B cell (primary cell): ENCODE measurements at regions of chr20 and their contacts with region 1.

Region 1: DNA sequence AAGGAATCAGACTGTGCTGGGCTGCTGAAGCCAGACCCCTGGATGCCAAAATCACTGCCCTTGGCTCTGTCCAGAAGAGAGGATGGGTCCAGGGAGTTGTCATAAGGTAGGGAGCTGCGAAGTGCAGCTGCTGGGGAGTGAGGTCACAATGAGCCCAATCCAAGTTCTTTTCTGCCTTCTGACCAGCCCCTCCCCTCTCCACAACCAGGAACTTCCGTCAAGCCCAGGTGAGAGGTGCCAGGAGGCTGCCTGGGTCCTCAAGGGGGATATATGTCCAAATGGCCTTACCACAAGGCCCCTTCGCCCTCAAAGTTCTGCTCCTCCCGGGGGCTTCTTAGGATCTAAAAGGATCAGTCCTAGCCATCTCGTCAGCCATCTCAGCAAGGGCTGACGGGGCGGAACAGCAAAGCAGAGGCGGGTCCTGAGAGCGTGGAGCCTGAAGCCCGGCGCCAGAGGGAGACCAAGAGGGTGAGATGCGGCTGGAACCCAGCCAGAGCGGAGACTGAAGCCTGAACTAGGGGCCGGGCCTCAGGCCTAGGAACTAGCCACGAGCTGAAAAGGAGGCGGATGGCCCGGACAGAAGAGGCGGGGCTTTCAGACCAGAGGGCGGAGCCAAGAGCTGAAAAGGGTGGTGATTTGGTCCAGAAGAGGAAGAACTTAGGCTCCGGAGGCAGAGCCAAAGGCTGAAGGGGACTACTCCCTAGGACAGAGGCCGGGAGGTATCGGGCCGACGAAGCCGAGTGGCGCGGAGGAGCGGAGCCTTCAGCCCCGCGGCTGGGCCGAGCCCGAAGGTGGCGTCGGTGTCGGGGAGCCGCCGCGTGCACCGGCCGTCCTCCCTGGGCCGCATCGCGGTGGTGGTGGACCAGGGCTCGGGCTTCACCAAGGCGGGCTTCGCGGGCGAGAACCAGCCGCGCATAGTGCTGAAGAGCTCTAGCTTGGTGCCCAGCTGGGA is at the start of gene ACTL10:
- DNase-seq: peak; percentile 92
- ATAC-seq: peak; percentile 73
- H3K4me3 ChIP-seq: peak within 1 kb of the TSS; percentile 26 to 79 (median 68)
- H3K4me3 Mint-ChIP-seq: peak within 1 kb of the TSS; percentile 98
- H3K27ac ChIP-seq: peak within 1 kb of the TSS; percentile 55 to 59
- H3K27ac Mint-ChIP-seq: peak within 1 kb of the TSS; percentile 96
- H3K4me1 ChIP-seq: peaks cover 18 to 44% of the 10 kb centered on the region in 2 donors
- H3K4me1 Mint-ChIP-seq: peaks cover 36% of the 10 kb centered on the region
- H3K27me3 ChIP-seq: no peaks in the 10 kb centered on the region
- H3K27me3 Mint-ChIP-seq: no peaks in the 10 kb centered on the region
- CTCF ChIP-seq: no peak
- total RNA-seq, gene ACTL10: 6.3 and 9.0 TPM in 2 replicates

Region 2: GRCh38 chr20:33401184-33401920 is 265.2 kb before region 1 on chr20 and contains the start of gene CDK5RAP1:
- CTCF ChIA-PET with region 1: interaction called, 36 read pairs
- POLR2A ChIA-PET with region 1: interaction called, 5 read pairs
- intact Hi-C with region 1: loop called (anchors 2 kb)
- DNase-seq: peak; percentile 91
- ATAC-seq: peak; percentile 98
- H3K4me3 ChIP-seq: peak within 1 kb of the TSS; percentile 89 to 99 (median 93)
- H3K4me3 Mint-ChIP-seq: peak within 1 kb of the TSS; percentile 96
- H3K27ac ChIP-seq: peak within 1 kb of the TSS; percentile 14 to 71
- H3K27ac Mint-ChIP-seq: peak within 1 kb of the TSS; percentile 89
- H3K4me1 ChIP-seq: peaks cover 19 to 34% of the 10 kb centered on the region in 2 donors
- H3K4me1 Mint-ChIP-seq: peaks cover 45% of the 10 kb centered on the region
- H3K27me3 ChIP-seq: no peaks in the 10 kb centered on the region
- H3K27me3 Mint-ChIP-seq: no peaks in the 10 kb centered on the region
- CTCF ChIP-seq: no peak
- total RNA-seq, gene CDK5RAP1: 50.4 and 52.6 TPM in 2 replicates

Region 3: GRCh38 chr20:33460711-33461110 is 205.9 kb before region 1 on chr20:
- CTCF ChIA-PET with region 1: interaction called, 61 read pairs
- POLR2A ChIA-PET with region 1: no interaction called
- intact Hi-C with region 1: loop called (anchors 2 kb)
- DNase-seq: no peak
- ATAC-seq: no peak
- H3K4me3 ChIP-seq: no peak overlapping the region
- H3K4me3 Mint-ChIP-seq: no peak overlapping the region
- H3K27ac ChIP-seq: no peak overlapping the region
- H3K27ac Mint-ChIP-seq: peak overlapping the region; percentile 13
- H3K4me1 ChIP-seq: peaks cover 10 to 14% of the 10 kb centered on the region in 2 donors
- H3K4me1 Mint-ChIP-seq: peaks cover 14% of the 10 kb centered on the region
- H3K27me3 ChIP-seq: no peaks in the 10 kb centered on the region
- H3K27me3 Mint-ChIP-seq: no peaks in the 10 kb centered on the region
- CTCF ChIP-seq: no peak

Region 4: GRCh38 chr20:33554914-33555420 is 111.6 kb before region 1 on chr20:
- CTCF ChIA-PET with region 1: interaction called, 3 read pairs
- POLR2A ChIA-PET with region 1: no interaction called
- intact Hi-C with region 1: loop called (anchors 5 kb)
- DNase-seq: peak; percentile 90
- ATAC-seq: peak; percentile 96
- H3K4me3 ChIP-seq: peak overlapping the region in 2 of 5 experiments; percentile 24 to 40
- H3K4me3 Mint-ChIP-seq: peak overlapping the region; percentile 79
- H3K27ac ChIP-seq: peak overlapping the region; percentile 92 to 97
- H3K27ac Mint-ChIP-seq: peak overlapping the region; percentile 96
- H3K4me1 ChIP-seq: peaks cover 28 to 31% of the 10 kb centered on the region in 2 donors
- H3K4me1 Mint-ChIP-seq: peaks cover 34% of the 10 kb centered on the region
- H3K27me3 ChIP-seq: no peaks in the 10 kb centered on the region
- H3K27me3 Mint-ChIP-seq: no peaks in the 10 kb centered on the region
- CTCF ChIP-seq: no peak

Region 5: DNA sequence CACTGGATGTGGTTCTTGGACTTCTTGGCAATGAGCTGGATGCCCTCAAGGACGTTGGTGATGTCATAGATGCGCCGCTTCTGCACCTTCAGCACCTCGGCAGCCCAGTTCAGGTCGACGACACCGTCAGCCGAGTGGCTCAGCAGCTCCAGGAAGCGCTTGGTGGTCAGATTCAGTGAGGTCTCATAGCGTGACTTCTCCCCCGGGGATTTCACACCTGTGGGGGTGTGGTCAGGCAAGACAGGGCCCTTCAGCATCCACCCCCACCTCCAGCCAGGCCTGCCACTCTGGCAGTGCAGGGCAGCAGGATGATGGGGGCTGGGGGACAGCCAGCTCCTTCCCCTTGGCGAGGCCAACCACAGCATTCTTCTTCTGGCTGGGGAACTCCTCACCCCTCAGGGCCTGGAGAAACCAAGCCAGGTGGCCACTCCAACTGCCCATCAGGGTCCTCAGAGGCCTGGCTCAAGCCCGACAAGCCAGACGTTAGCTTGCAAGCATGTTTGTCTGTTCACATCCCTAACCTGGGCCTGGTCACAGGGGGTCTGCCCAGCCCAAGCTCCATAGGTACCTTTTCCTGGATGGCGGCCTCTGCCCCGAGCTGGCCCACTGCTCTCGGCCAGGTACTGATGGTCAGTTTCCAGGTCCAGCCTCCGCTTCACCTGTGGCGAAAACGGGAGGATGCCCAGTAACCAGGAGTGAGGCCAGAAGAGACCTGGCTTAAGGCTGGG is 13.4 kb after region 1 on chr20:
- CTCF ChIA-PET with region 1: interaction called, 29 read pairs
- POLR2A ChIA-PET with region 1: interaction called, 8 read pairs
- intact Hi-C with region 1: no loop called
- DNase-seq: peak; percentile 83
- ATAC-seq: peak; percentile 93
- H3K4me3 ChIP-seq: no peak overlapping the region
- H3K4me3 Mint-ChIP-seq: peak overlapping the region; percentile 39
- H3K27ac ChIP-seq: peak overlapping the region in 1 of 2 donors; percentile 18
- H3K27ac Mint-ChIP-seq: peak overlapping the region; percentile 68
- H3K4me1 ChIP-seq: peaks cover 27 to 32% of the 10 kb centered on the region in 2 donors
- H3K4me1 Mint-ChIP-seq: peaks cover 39% of the 10 kb centered on the region
- H3K27me3 ChIP-seq: no peaks in the 10 kb centered on the region
- H3K27me3 Mint-ChIP-seq: no peaks in the 10 kb centered on the region
- CTCF ChIP-seq: no peak

Region 6: DNA sequence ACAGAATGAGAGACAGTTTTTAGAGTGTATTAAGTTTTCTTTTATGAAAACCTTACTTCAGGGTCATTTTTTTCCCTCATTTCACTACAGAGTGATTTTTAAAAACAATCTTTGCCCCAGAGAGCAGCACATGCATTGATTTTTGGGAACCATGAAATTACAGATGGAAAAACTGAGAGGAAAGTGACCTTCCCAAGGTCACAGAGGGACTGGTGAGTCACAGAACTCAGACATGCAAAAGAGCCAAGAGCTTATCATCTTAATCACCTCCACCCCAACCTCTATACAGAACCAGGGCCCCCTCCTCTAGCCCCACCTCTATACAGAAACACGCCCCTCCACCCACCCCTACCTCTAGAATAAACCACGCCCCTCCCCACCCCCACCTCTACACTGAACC is 42.8 kb after region 1 on chr20:
- CTCF ChIA-PET with region 1: no interaction called
- POLR2A ChIA-PET with region 1: no interaction called
- intact Hi-C with region 1: no loop called
- DNase-seq: no peak
- ATAC-seq: no peak
- H3K4me3 ChIP-seq: no peak overlapping the region
- H3K4me3 Mint-ChIP-seq: no peak overlapping the region
- H3K27ac ChIP-seq: no peak overlapping the region
- H3K27ac Mint-ChIP-seq: no peak overlapping the region
- H3K4me1 ChIP-seq: peaks cover 0 to 4% of the 10 kb centered on the region in 2 donors
- H3K4me1 Mint-ChIP-seq: peaks cover 2% of the 10 kb centered on the region
- H3K27me3 ChIP-seq: no peaks in the 10 kb centered on the region
- H3K27me3 Mint-ChIP-seq: no peaks in the 10 kb centered on the region
- CTCF ChIP-seq: no peak

Region 7: GRCh38 chr20:33731693-33732165 is 65.2 kb after region 1 on chr20 and contains the start of gene ZNF341:
- CTCF ChIA-PET with region 1: interaction called, 5 read pairs
- POLR2A ChIA-PET with region 1: interaction called, 6 read pairs
- intact Hi-C with region 1: loop called (anchors 1 kb)
- DNase-seq: no peak
- ATAC-seq: peak; percentile 74
- H3K4me3 ChIP-seq: peak within 1 kb of the TSS; percentile 63 to 84 (median 68)
- H3K4me3 Mint-ChIP-seq: peak within 1 kb of the TSS; percentile 98
- H3K27ac ChIP-seq: peak within 1 kb of the TSS; percentile 61 to 81
- H3K27ac Mint-ChIP-seq: peak within 1 kb of the TSS; percentile 96
- H3K4me1 ChIP-seq: peaks cover 20 to 29% of the 10 kb centered on the region in 2 donors
- H3K4me1 Mint-ChIP-seq: peaks cover 24% of the 10 kb centered on the region
- H3K27me3 ChIP-seq: no peaks in the 10 kb centered on the region
- H3K27me3 Mint-ChIP-seq: no peaks in the 10 kb centered on the region
- CTCF ChIP-seq: peak; percentile 84
- total RNA-seq, gene ZNF341: 9.1 and 9.9 TPM in 2 replicates

Region 8: DNA sequence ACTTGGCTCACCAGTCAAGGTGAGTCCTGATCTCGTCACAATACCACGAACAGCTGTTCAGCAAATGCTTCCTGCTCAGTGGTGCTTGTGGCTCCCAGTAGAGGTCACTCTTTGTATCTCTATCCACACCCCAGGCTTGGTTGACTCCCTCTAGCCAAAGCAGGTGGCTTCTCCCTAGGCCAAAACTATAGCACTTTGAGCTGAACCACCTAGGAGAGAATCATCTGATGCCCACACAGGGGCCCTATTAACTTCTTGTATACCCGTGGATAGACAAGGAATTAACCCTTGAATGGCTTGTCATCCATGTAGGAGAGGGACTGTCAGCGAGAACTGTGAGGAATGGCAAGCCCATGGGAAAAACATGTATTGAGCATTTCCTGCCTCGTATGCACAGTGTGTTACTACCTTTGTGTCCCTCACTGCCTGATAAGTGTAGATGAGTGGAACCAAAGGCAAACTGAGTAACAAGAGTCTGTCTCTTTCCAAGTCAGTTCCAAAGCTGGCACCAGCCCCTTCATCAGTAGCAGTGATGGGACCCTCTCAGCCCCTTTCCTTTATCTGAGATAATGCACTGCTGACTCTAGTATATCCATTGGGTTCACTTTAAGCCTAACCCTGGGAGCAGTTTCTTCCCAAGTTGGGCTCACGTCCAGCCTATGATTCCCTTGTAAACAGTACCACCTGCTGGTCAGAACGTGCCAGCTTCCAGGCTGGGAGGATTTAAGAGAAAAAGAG is 402.9 kb after region 1 on chr20:
- CTCF ChIA-PET with region 1: interaction called, 7 read pairs
- POLR2A ChIA-PET with region 1: no interaction called
- intact Hi-C with region 1: loop called (anchors 5 kb)
- DNase-seq: peak; percentile 75
- ATAC-seq: peak; percentile 90
- H3K4me3 ChIP-seq: no peak overlapping the region
- H3K4me3 Mint-ChIP-seq: no peak overlapping the region
- H3K27ac ChIP-seq: no peak overlapping the region
- H3K27ac Mint-ChIP-seq: peak overlapping the region; percentile 59
- H3K4me1 ChIP-seq: peaks cover 9 to 13% of the 10 kb centered on the region in 2 donors
- H3K4me1 Mint-ChIP-seq: peaks cover 21% of the 10 kb centered on the region
- H3K27me3 ChIP-seq: no peaks in the 10 kb centered on the region
- H3K27me3 Mint-ChIP-seq: no peaks in the 10 kb centered on the region
- CTCF ChIP-seq: peak; percentile 74